ENCODE measurements at regions of chr11 and their contacts with region 1.

Region 1: DNA sequence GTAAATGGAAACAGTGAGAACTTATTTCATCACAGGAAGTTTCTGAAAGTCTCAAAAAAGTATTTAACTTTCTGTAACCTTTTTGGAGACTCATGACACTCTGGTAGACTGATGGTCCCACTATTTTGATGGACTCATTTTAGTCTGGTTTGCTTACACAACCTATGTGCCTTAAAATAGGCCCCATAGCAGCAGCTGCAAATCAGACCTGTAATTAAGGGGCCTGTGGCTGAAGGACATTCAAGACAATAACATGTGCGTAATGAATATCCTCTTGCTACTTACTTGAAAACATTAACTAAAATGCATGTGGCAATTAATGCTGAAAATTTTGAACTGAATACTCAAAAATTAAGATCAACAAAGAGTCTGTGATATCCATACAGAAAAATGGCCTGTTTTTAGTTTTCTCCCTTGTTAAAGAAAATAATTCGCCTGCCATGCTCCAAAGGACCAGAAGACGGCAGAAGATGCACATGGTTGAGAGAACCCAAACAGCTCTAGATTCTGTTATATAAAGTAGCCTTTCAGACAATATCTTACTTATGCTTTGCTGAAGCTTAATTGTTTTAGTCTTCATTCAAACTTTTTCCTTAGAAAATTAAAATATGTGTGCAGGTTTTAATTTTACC is 568.5 kb downstream of the KCNA4 start:
- DNase-seq: no peak
- H3K4me3 Mint-ChIP-seq: no peak overlapping the region
- H3K27ac Mint-ChIP-seq: no peak overlapping the region
- H3K4me1 Mint-ChIP-seq: no peaks in the 10 kb centered on the region
- H3K27me3 Mint-ChIP-seq: no peaks in the 10 kb centered on the region
- CTCF ChIP-seq: peak; percentile 14

Region 2: GRCh38 chr11:30143098-30143705 is 694.8 kb after region 1 on chr11:
- CTCF ChIA-PET with region 1: no interaction called
- intact Hi-C with region 1: loop called (anchors 5 kb)
- DNase-seq: peak; percentile 11
- H3K4me3 Mint-ChIP-seq: no peak overlapping the region
- H3K27ac Mint-ChIP-seq: no peak overlapping the region
- H3K4me1 Mint-ChIP-seq: no peaks in the 10 kb centered on the region
- H3K27me3 Mint-ChIP-seq: no peaks in the 10 kb centered on the region
- CTCF ChIP-seq: peak; percentile 44

Region 3: GRCh38 chr11:30196400-30197206 is 748.2 kb after region 1 on chr11:
- CTCF ChIA-PET with region 1: interaction called, 3 read pairs
- intact Hi-C with region 1: loop called (anchors 5 kb)
- DNase-seq: peak; percentile 67
- H3K4me3 Mint-ChIP-seq: no peak overlapping the region
- H3K27ac Mint-ChIP-seq: no peak overlapping the region
- H3K4me1 Mint-ChIP-seq: no peaks in the 10 kb centered on the region
- H3K27me3 Mint-ChIP-seq: no peaks in the 10 kb centered on the region
- CTCF ChIP-seq: peak; percentile 58

Measured in Calu3 (cell line).